Common myeloid progenitor, CD34-positive (primary cell): ENCODE measurements at regions of chr9 and their contacts with region 1.

Region 1: DNA sequence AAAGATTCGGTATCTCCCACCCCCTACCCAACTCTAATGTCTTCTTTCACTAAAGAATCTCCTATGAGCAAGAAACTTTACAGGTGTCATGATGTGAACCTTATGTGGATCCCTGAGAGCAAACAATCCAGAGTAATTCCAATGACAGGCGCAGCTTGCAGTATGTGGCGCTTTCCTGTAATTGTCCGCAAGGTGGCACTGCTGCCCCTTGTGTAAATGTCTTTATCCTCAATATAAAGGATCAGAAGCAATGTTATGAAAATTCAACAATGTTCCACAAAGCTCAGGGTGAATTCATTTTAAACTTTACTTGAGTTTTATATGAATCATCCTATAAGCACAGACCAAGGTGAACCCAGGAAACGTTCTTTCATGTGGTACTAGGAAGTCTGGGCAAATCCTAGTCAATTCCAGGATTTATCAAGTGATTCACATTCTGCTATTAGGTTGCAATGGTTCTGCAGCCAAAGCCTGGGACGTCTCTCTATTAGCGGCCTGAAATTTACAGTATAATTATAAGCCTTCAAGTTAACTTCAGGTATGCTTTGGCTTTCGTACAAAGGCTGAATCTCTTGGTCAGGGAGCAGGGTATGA is 113.7 kb downstream of the TRPM6 start:
- DNase-seq: peak; percentile 74 to 89 (median 82)
- H3K4me3 ChIP-seq: no peak overlapping the region
- H3K27ac ChIP-seq: no peak overlapping the region
- H3K4me1 ChIP-seq: no peaks in the 10 kb centered on the region
- H3K27me3 ChIP-seq: no peaks in the 10 kb centered on the region

Region 2: DNA sequence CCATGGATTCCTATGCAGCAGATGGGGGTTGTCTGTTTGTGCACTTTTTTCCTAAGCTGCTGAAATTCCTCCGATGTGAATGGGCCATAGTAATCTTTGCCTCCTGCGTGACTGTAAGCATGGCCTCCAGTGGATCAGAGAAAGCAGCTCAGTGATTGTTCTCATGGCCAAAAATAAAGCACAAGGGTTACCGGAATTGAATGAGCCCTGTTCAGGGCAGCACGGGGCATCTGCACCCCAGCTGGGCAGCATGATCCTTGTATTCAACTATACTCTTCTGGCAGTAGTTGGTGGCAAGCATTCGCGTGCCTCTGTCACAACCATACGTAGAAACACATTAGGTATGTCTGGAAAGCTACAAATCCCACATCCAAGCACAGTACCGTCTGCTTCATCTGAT is 82.9 kb before region 1 on chr9:
- CTCF ChIA-PET with region 1: no interaction called
- POLR2A ChIA-PET with region 1: no interaction called
- DNase-seq: no peak
- H3K4me3 ChIP-seq: no peak overlapping the region
- H3K27ac ChIP-seq: no peak overlapping the region
- H3K4me1 ChIP-seq: no peaks in the 10 kb centered on the region
- H3K27me3 ChIP-seq: no peaks in the 10 kb centered on the region

Region 3: GRCh38 chr9:74742792-74743730 is 30.9 kb before region 1 on chr9:
- CTCF ChIA-PET with region 1: no interaction called
- POLR2A ChIA-PET with region 1: no interaction called
- DNase-seq: peak; percentile 7 to 45 (median 32)
- H3K4me3 ChIP-seq: no peak overlapping the region
- H3K27ac ChIP-seq: no peak overlapping the region
- H3K4me1 ChIP-seq: no peaks in the 10 kb centered on the region
- H3K27me3 ChIP-seq: peaks cover 0 to 12% (median 8%) of the 10 kb centered on the region in 5 experiments

Region 4: GRCh38 chr9:74952281-74953151 is 178.5 kb after region 1 on chr9 and contains the start of gene C9orf40:
- CTCF ChIA-PET with region 1: interaction called, 42 read pairs
- POLR2A ChIA-PET with region 1: no interaction called
- DNase-seq: peak; percentile 90 to 93 (median 93)
- H3K4me3 ChIP-seq: peak within 1 kb of the TSS; percentile 83 to 95 (median 91)
- H3K27ac ChIP-seq: peak within 1 kb of the TSS; percentile 40 to 84
- H3K4me1 ChIP-seq: peaks cover 0 to 17% (median 10%) of the 10 kb centered on the region in 4 experiments
- H3K27me3 ChIP-seq: no peaks in the 10 kb centered on the region

Region 5: GRCh38 chr9:75001719-75002422 is 227.9 kb after region 1 on chr9:
- CTCF ChIA-PET with region 1: interaction called, 208 read pairs
- POLR2A ChIA-PET with region 1: no interaction called
- DNase-seq: peak; percentile 90 to 95 (median 92)
- H3K4me3 ChIP-seq: peak overlapping the region in 2 of 7 experiments; percentile 34 to 37
- H3K27ac ChIP-seq: no peak overlapping the region
- H3K4me1 ChIP-seq: peaks cover 5 to 10% (median 10%) of the 10 kb centered on the region in 4 experiments
- H3K27me3 ChIP-seq: no peaks in the 10 kb centered on the region

Region 6: GRCh38 chr9:75013735-75014134 is 239.8 kb after region 1 on chr9:
- CTCF ChIA-PET with region 1: interaction called, 208 read pairs
- POLR2A ChIA-PET with region 1: no interaction called
- DNase-seq: peak in 2 of 3 donors; percentile 44 to 53
- H3K4me3 ChIP-seq: no peak overlapping the region
- H3K27ac ChIP-seq: no peak overlapping the region
- H3K4me1 ChIP-seq: no peaks in the 10 kb centered on the region
- H3K27me3 ChIP-seq: no peaks in the 10 kb centered on the region

Region 7: DNA sequence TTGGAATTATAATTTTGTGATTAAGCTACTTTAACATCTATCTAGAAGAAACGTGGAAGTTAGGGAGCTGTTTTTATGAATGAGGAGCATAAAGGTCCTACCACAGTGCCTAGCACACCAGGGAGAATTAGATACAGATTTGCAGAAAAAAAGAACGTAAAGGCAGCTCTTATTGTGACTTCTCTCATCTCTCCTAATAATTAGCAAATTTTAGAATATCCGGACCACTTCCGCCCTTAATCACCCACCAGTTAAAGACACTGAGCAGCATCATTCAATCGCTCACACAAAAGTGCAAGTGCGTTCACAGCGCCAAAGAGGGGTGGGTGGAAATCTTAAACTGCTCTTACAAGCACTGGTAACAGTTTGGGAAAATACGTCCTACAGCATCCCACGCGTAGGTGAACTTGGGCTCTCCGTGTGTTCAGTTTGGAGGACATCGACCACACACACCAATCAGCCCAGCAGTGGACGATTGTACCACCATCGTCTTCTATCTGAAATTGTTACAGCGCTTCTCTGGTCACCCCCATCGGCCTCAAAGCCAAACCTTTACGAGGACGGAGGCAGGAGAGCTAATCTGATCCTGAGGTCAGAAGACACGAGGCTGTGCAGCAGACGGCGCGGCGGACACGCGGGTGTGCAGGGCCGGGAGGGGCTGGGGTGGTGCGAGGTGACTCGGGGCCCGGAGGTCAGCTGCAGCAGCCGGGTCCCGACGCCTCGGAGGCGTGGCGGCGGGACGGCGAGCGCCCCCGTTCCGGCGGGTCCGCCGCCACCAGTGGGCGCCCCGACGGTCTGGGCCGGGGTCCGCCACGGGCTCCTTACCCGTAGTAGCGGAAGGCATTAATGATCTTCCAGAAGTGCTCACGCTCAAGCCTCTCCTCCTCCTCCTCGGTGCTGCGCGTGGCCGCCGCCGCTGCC is 253.5 kb after region 1 on chr9:
- CTCF ChIA-PET with region 1: interaction called, 21 read pairs
- POLR2A ChIA-PET with region 1: no interaction called
- DNase-seq: peak; percentile 32 to 77 (median 66)
- H3K4me3 ChIP-seq: peak overlapping the region; percentile 79 to 98 (median 91)
- H3K27ac ChIP-seq: peak overlapping the region; percentile 46 to 83
- H3K4me1 ChIP-seq: peaks cover 15 to 31% (median 24%) of the 10 kb centered on the region in 4 experiments
- H3K27me3 ChIP-seq: no peaks in the 10 kb centered on the region

Region 8: DNA sequence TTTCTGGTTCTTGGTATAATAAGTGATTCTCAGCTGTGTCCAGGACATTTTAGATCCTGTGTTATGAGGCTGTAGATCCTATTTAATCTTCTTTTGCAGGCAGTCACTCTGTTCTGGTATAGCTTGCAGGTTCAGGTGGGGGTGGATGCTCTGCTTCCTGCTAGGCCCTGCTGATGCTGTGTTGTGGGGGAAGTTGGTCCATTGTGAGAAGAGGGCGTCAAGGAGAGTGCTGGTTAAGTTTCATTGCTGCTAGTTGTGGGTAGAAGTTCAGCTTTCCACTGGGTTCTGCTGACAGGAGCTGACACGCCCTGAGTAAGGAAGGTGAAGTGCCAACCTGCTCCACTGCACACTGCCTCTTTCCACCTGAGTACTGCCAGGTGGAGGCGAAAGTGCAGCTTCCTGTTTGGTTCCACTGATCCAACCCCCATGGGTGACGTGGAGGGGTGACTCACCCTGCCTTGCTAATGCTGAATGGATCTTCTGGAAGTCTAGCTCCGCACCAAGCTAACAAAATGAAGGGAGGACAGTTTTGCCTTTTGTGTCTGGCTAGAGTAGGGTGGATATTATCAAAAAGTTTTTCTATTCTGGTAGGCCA is 297.6 kb after region 1 on chr9:
- CTCF ChIA-PET with region 1: interaction called, 102 read pairs
- POLR2A ChIA-PET with region 1: no interaction called
- DNase-seq: no peak
- H3K4me3 ChIP-seq: no peak overlapping the region
- H3K27ac ChIP-seq: no peak overlapping the region
- H3K4me1 ChIP-seq: no peaks in the 10 kb centered on the region
- H3K27me3 ChIP-seq: no peaks in the 10 kb centered on the region

Region 9: DNA sequence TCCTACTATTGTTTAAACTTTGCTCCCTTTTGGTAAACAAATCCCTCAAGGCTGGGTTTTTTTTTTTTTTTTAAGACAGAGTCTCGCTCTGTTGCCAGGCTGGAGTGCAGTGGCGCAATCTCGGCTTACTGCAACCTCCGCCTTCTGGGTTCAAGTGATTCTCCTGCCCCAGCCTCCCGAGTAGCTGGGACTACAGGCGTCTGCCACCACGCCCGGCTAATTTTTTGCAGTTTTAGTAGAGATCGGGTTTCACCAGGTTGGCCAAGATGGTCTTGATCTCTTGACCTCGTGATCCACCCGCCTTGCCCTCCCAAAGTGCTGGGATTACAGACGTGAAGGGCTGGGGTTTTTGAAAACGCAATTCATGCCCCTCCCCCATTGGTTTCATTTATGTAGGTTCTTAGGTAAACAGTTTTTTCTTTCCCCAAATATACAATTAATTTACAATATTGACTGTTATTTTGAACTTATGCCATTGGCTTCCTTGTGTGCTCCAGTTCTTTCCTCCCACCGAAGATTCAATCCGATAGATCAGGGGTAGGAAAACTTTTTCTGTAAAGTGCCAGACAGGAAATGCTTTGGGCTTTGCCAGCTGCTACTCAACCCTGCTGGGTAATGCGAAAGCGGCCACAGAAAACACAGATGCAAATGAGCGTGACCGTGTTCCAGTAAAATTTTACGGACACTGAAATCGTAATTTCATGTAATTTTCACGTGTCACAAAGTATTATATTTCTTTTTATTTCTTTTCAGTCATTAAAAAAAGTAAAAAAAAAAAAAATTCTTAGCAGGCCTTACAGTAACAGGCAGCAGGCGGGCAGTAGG is 313.1 kb after region 1 on chr9:
- CTCF ChIA-PET with region 1: interaction called, 10 read pairs
- POLR2A ChIA-PET with region 1: no interaction called
- DNase-seq: peak; percentile 44 to 74 (median 65)
- H3K4me3 ChIP-seq: peak overlapping the region; percentile 91 to 99 (median 95)
- H3K27ac ChIP-seq: peak overlapping the region; percentile 54 to 76
- H3K4me1 ChIP-seq: peaks cover 7 to 55% (median 30%) of the 10 kb centered on the region in 4 experiments
- H3K27me3 ChIP-seq: no peaks in the 10 kb centered on the region